ENCODE measurements at regions of chr20 and their contacts with region 1.

Region 1: DNA sequence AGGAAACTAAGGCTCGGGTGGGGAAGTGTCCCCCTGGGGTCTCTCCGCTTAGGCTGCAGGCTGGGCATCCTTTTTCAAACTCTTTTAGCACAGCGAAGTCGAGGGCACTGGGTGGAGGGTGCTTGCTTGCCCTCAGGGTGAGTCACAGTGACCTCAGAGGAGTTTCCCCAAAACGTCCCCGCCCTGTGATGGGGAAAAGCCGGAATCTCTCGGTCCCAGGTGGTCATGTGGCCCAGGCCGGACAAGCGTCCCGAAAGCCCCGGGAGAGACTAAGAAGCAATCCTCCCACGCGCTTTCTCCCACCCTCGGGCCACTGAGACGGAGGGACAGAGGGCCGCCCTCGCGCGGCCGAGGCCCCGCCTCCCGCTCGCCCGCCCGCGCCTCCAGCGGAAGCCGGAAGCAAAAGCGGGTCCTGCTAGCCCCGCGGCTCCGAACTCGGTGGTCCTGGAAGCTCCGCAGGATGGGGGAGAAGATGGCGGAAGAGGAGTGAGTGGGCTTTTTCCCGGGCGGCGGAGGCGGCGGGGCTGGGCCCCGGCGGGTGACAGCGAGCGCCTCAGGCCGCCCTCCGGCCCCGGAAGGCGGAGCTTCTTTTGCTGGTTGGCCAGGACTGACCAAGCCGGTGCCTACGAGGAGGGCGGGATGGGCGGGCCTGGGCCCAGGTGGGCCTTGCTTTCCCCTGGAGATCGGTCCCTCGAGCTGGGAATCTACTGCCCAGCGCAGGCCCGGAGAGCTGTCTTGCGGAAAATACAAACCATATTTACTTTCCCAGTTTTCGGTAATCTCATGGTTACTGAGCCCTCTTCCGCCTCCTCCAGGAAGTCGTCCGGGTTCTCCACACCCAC is at the start of gene SLC9A8:
- DNase-seq: peak; percentile 93
- H3K4me3 Mint-ChIP-seq: peak within 1 kb of the TSS; percentile 89
- H3K27ac Mint-ChIP-seq: peak within 1 kb of the TSS; percentile 44
- H3K4me1 Mint-ChIP-seq: peaks cover 54% of the 10 kb centered on the region
- H3K27me3 Mint-ChIP-seq: no peaks in the 10 kb centered on the region
- CTCF ChIP-seq: peak; percentile 69
- total RNA-seq, gene SLC9A8: 30.0 and 31.7 TPM in 2 replicates

Region 2: DNA sequence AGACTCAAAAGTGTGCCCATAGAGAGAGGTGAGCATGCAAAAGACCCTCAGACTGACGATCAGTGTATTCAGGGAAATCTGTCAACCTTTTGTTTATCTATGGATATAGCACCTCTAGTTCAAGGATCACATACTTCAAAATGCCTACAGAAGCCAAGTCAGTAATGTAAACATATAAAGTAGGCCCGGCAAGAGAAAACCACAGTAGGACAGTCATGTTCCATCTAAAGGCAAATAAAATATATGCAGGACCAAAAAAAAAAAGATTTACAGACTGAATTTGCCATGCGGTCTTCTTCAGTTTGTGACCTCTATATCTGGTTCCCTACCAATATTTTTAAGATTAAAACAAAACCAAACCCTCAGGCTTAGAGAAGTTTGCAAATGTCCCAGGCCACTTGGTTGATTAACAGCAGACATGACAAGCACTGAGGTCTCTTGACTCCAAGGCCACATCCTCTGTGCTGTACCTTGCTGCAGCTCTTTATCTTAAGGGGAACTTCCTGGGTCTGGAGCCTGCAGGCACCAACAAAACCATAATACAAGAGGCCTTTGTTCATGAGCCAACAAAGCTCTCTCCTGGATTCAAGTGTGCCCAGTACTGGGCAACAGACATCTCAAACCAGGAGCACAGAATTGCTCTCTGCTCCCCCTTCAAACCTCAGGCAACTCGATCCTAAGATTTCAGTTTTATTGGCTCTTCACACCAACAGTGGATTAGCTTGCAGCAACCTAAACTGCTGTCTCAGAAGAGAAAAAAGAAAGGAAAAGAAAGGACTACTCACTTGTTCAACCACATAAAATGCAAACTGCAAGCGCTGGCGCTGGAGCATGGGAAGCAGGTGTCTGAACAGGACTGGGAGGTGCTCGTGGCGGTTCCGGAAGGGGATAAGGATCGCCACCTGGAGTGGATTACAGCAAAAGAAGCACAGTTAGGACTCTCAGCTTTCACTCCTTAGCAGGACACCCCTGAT is 170.7 kb before region 1 on chr20:
- CTCF ChIA-PET with region 1: interaction called, 11 read pairs
- intact Hi-C with region 1: no loop called
- DNase-seq: peak; percentile 56
- H3K4me3 Mint-ChIP-seq: no peak overlapping the region
- H3K27ac Mint-ChIP-seq: peak overlapping the region; percentile 37
- H3K4me1 Mint-ChIP-seq: peaks cover 19% of the 10 kb centered on the region
- H3K27me3 Mint-ChIP-seq: no peaks in the 10 kb centered on the region
- CTCF ChIP-seq: no peak

Region 3: DNA sequence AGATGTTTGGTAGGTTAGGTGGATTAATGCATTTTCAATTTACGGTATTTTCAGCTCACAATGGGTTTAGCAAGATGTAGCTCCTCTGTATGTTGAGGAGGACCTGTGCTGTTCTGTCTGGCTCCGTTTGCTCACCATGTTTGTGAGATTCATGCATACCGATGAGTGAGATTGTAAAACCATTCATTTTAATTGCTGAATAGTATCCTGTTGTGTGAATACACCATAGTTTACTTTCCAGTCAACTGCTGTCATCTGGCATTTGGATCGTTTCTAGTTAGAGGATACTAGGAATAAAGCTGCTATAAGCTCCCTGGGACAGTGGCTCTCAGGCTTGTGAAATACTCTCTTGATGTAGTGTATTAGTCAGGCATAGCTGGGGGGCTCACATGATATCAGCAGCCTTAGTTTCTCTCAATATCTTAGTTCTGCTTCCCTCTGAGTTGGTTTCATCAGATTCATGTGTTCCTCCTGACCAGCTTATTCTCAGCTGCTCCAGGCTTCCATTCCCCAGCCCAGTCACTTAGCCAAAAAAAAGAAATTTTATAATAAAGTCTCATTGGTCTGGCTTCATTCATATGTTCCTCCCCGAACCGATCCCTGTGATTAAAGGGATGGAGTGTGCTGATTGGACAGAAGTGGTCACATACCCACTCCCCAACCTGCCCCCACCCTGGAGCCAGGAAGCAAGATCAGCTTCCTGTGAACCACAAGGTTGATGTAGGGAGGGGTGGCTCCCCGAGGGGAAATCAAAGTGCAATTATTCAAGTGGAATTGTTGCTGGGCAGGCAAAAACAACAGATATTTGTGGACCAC is 88.1 kb before region 1 on chr20:
- CTCF ChIA-PET with region 1: no interaction called
- intact Hi-C with region 1: no loop called
- DNase-seq: peak; percentile 41
- H3K4me3 Mint-ChIP-seq: no peak overlapping the region
- H3K27ac Mint-ChIP-seq: peak overlapping the region; percentile 13
- H3K4me1 Mint-ChIP-seq: peaks cover 17% of the 10 kb centered on the region
- H3K27me3 Mint-ChIP-seq: no peaks in the 10 kb centered on the region
- CTCF ChIP-seq: no peak

Region 4: DNA sequence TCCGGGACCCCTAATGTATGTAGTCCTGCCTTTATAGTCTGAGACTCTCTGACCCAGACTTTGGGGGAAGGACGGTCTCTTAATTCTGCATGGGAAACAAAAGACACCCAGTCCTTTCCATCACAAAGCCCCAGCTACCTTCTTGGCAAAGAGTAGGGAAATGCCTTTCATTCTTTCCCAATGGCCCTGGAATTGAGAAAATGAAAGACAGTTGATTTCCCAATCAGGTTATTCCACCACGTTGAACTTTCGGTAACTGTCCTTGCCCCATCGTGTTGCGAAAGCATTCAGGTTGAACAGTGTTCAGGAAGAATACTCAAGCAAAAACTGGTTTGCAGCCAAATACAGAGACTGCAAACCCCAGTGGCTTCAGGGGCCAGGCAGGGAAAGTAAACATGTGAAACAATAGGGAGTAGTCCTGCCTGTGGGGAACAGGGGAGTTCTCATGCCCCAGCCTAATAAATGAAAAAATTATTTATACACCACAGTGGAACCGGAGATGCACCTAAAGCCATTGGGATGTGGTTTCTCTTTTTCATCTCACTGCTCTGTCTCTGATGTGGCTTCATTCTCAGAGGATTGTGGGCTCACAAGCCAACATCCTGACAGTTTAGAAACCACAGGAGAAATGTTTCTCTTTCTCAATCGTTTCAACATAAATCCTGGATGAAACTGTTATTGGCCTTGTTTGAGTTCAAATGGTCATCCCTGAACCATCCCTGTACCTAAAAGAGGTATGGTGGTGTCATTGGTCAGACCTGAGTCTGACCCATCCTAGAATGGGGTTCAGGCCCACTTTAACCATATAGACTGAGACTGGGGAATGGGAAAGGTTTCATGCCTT is 44.3 kb before region 1 on chr20:
- CTCF ChIA-PET with region 1: interaction called, 4 read pairs
- intact Hi-C with region 1: loop called (anchors 5 kb)
- DNase-seq: peak; percentile 83
- H3K4me3 Mint-ChIP-seq: peak overlapping the region; percentile 62
- H3K27ac Mint-ChIP-seq: peak overlapping the region; percentile 97
- H3K4me1 Mint-ChIP-seq: peaks cover 72% of the 10 kb centered on the region
- H3K27me3 Mint-ChIP-seq: no peaks in the 10 kb centered on the region
- CTCF ChIP-seq: no peak

Region 5: DNA sequence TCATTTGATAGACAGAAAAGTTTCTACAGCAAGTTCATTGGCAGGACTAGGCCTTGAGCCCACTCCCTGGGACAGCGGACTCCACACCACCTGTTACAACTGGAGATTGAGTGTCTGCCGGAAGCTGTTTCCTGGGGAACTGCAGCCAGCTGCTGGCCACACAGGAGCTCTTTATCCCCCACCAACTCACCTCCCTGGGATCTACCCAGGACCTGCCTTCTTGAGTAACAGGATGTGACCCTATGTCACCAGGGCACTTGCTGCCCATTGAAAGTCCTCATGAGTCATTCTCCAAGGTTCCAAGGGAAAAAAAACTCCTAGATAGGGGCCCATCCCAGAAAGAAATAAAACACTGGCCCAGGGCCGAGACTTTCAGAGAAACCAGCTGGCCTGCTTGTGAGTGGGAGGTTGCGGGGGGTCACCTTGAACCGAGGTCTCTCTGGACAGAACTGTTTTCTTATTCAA is 37.4 kb before region 1 on chr20:
- CTCF ChIA-PET with region 1: interaction called, 15 read pairs
- intact Hi-C with region 1: no loop called
- DNase-seq: peak; percentile 89
- H3K4me3 Mint-ChIP-seq: peak overlapping the region; percentile 43
- H3K27ac Mint-ChIP-seq: peak overlapping the region; percentile 85
- H3K4me1 Mint-ChIP-seq: peaks cover 73% of the 10 kb centered on the region
- H3K27me3 Mint-ChIP-seq: no peaks in the 10 kb centered on the region
- CTCF ChIP-seq: no peak

Region 6: GRCh38 chr20:49915378-49916145 is 102.9 kb after region 1 on chr20 and contains the start of gene SPATA2:
- CTCF ChIA-PET with region 1: no interaction called
- intact Hi-C with region 1: no loop called
- DNase-seq: peak; percentile 98
- H3K4me3 Mint-ChIP-seq: peak within 1 kb of the TSS; percentile 95
- H3K27ac Mint-ChIP-seq: peak within 1 kb of the TSS; percentile 99
- H3K4me1 Mint-ChIP-seq: peaks cover 50% of the 10 kb centered on the region
- H3K27me3 Mint-ChIP-seq: no peaks in the 10 kb centered on the region
- CTCF ChIP-seq: no peak
- total RNA-seq, gene SPATA2: 16.0 and 16.6 TPM in 2 replicates

Region 7: DNA sequence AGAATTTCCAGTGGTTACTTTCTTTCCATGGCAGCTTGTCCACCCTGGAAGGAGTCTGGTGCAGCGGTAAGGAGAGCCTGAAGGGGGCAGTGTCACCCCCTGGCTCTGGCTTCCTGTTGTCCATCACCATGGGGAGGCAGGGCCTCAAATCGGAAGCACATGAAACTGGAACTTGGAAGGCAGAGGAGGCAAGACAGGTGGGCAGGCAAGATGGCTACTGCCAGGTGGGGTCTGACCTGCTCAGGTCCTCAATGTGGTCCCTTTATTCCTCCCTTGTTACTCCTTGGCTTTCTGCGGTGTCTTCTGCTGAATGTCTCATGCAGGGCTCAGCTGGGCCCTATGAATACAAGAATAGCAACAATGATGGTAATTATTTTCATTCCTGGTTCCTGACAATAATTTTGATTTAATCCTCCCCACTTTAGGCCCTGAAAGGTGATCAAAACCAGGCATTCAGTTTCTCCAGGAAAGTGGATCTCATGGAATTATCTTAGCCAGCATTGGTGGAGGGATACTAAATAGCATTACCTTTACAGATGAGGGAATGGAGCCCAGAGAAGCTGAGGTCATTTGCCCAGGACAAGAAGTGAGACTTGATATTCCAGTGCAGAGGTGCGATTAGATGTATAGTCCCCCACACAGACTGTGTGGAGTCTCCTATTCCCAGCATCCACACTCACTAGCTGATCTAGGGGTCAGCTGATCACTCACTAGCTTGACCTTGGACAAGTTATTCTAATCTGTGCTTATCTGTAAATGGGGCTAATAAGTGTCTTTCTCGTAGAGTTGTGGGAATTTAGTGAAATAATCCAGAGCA is 152.5 kb after region 1 on chr20:
- CTCF ChIA-PET with region 1: no interaction called
- intact Hi-C with region 1: no loop called
- DNase-seq: peak; percentile 75
- H3K4me3 Mint-ChIP-seq: no peak overlapping the region
- H3K27ac Mint-ChIP-seq: no peak overlapping the region
- H3K4me1 Mint-ChIP-seq: peaks cover 33% of the 10 kb centered on the region
- H3K27me3 Mint-ChIP-seq: no peaks in the 10 kb centered on the region
- CTCF ChIP-seq: peak; percentile 80

Region 8: GRCh38 chr20:50085452-50086365 is 273.0 kb after region 1 on chr20:
- CTCF ChIA-PET with region 1: no interaction called
- intact Hi-C with region 1: no loop called
- DNase-seq: peak; percentile 52
- H3K4me3 Mint-ChIP-seq: peak overlapping the region; percentile 8
- H3K27ac Mint-ChIP-seq: peak overlapping the region; percentile 16
- H3K4me1 Mint-ChIP-seq: peaks cover 16% of the 10 kb centered on the region
- H3K27me3 Mint-ChIP-seq: no peaks in the 10 kb centered on the region
- CTCF ChIP-seq: peak; percentile 85

Measured in Calu3 (cell line).